ENCODE measurements at regions of chr15 and their contacts with region 1.

Region 1: DNA sequence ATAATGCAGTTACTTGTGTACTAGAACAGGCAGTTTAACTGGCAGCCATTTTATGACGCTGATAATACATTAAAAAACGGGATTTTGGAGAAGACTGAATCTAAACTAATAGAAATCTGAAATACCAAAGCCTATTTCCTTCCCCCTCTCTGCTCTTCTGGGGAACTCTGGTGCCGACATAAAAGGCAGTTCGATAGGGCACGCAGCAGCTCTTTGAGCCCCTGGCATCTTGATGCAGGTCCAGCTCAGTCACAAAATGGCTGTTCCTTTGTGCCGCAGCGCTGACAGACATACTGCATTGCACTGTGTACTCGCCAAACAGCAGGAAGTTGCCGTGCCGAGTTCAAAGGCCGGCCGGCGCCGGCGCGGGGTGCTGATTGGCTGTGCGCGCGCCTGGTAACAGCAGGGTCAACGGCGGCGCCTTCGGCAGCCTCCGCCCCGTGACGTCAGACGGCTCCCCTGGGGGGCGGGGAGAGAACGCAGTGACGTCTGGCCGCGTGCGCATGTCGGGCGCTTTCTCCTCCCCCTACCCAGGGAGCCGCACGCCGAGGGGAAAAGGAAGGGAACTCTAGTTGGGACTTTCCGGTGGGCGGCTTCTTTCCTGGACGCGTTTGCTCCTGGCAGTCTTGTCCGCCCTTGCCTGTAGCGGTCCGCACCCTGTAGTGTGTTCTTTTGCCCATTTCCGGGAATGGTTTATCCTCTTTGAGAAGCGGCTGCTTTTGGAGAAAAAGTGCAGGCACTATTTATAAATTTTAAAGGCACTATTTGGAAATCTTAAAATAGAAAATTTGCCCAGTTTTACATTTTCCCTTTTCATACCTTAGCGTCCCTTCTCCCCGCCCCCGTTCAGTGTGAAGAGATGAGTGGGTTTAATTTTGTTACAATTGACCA is 4.1 kb downstream of the CHD2 start:
- DNase-seq: peak; percentile 99
- H3K4me3 ChIP-seq: peak overlapping the region; percentile 64 to 100 (median 97)
- H3K27ac ChIP-seq: peak overlapping the region; percentile 98
- H3K4me1 ChIP-seq: peaks cover 54% of the 10 kb centered on the region
- H3K27me3 ChIP-seq: no peaks in the 10 kb centered on the region
- CTCF ChIP-seq: no peak
- POLR2A ChIP-seq: peak; percentile 95

Region 2: DNA sequence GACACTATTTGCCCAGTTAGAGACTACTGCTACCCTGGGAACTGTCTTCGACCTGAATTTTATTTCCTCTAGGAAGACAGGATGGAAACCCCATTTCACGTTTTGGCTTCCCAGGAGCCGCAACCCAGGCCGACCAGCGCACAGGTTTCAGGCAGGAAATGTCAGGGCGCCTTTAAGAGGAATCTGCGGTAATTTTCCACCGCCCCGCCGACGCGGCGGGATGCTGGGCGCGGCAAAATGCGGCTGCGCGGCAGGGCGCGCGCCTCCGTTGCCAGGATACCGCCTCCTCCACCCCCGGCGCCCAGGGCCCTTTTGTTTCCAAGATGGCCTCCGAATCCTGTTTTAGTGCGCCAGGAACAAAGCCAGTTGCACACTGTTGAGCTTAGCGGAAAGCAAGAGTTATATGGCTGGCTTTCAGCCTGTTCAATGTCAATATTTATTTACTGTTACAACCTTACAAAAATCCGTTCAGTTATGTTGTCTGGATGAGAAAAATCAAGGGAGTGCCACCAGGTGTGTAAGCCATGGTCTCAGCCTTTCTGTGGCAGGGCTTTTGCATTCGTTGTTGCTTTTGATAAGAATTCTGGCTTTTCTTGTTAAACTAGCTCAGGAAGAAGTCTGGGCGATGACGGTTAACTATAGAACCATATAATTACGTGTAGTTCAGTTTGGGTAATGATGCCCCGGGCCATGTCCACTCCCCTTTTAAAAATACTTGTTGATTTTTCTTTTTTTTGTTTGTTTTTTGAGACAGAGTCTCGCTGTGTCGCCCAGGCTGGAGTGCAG is 83.8 kb before region 1 on chr15:
- CTCF ChIA-PET with region 1: interaction called, 5 read pairs
- POLR2A ChIA-PET with region 1: interaction called, 3 read pairs
- dilution Hi-C with region 1: loop called (anchors 25 kb)
- intact Hi-C with region 1: loop called (anchors 1 kb)
- DNase-seq: peak; percentile 94
- H3K4me3 ChIP-seq: peak overlapping the region; percentile 15 to 62 (median 19)
- H3K27ac ChIP-seq: peak overlapping the region; percentile 64
- H3K4me1 ChIP-seq: peaks cover 9% of the 10 kb centered on the region
- H3K27me3 ChIP-seq: peaks cover 0 to 2% of the 10 kb centered on the region in 2 experiments
- CTCF ChIP-seq: no peak
- POLR2A ChIP-seq: peak; percentile 79

Region 3: GRCh38 chr15:92917606-92918407 is 13.6 kb after region 1 on chr15:
- CTCF ChIA-PET with region 1: interaction called, 67 read pairs
- POLR2A ChIA-PET with region 1: interaction called, 18 read pairs
- dilution Hi-C with region 1: no loop called
- intact Hi-C with region 1: loop called (anchors 1 kb)
- DNase-seq: peak; percentile 98
- H3K4me3 ChIP-seq: peak overlapping the region in 1 of 3 experiments; percentile 42
- H3K27ac ChIP-seq: peak overlapping the region; percentile 87
- H3K4me1 ChIP-seq: peaks cover 56% of the 10 kb centered on the region
- H3K27me3 ChIP-seq: no peaks in the 10 kb centered on the region
- CTCF ChIP-seq: peak; percentile 69 to 82
- POLR2A ChIP-seq: peak; percentile 54

Measured in endothelial cell of umbilical vein (primary cell).